Testis (tissue), 5 donors: ENCODE measurements at regions of chr17 and their contacts with region 1.

Region 1: GRCh38 chr17:55351226-55351625 is 70.4 kb downstream of the MMD start:
- DNase-seq: no peak
- H3K4me3 ChIP-seq: no peak overlapping the region
- H3K27ac ChIP-seq: no peak overlapping the region
- H3K4me1 ChIP-seq: no peaks in the 10 kb centered on the region
- H3K27me3 ChIP-seq: no peaks in the 10 kb centered on the region
- CTCF ChIP-seq: no peak
- POLR2A ChIP-seq: no peak

Region 2: GRCh38 chr17:54992797-54993639 is 358.2 kb before region 1 on chr17:
- intact Hi-C with region 1: loop called (anchors 5 kb)
- DNase-seq: no peak
- H3K4me3 ChIP-seq: no peak overlapping the region
- H3K27ac ChIP-seq: no peak overlapping the region
- H3K4me1 ChIP-seq: no peaks in the 10 kb centered on the region
- H3K27me3 ChIP-seq: no peaks in the 10 kb centered on the region
- CTCF ChIP-seq: peak in 2 of 3 experiments; percentile 49 to 65
- POLR2A ChIP-seq: no peak

Region 3: DNA sequence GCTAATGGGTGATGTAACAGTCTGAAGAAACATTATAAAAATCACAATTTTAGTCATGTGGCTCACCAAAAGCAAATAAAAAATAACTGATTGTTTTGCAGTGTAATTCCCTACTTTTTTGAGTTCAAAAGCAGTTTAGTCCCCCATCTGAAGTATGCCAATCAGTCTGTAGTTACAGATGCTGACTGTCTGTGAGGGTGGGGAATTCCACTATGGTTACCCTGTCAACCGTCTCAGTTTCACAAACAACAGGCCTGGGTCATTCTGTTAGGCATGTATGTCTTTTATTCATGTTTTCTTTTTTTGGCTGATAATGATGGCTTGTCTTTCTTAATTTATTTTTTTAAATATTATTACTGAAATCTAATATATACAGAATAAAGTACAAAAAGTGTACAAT is 313.4 kb before region 1 on chr17:
- intact Hi-C with region 1: no loop called
- DNase-seq: no peak
- H3K4me3 ChIP-seq: no peak overlapping the region
- H3K27ac ChIP-seq: no peak overlapping the region
- H3K4me1 ChIP-seq: no peaks in the 10 kb centered on the region
- H3K27me3 ChIP-seq: no peaks in the 10 kb centered on the region
- CTCF ChIP-seq: no peak
- POLR2A ChIP-seq: no peak

Region 4: DNA sequence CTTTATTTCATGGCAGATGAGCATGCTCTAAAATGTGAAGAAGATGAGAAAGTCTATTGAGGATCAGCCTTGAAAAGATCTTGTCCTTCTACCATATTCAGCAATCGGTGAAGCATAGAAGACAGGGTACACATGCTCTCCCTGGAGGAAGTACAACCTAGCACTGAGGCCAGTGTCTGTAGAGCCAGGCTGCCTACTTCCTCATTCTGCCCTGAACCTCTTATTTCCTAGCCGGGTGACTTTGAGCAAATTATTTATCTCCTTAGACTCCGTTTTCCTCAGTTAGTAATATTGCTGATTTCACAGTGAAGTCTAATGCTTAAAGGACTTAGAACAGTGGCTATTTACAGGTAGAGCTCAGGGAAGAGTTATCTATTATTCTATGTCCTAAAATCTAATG is 313.1 kb after region 1 on chr17:
- intact Hi-C with region 1: no loop called
- DNase-seq: no peak
- H3K4me3 ChIP-seq: no peak overlapping the region
- H3K27ac ChIP-seq: no peak overlapping the region
- H3K4me1 ChIP-seq: no peaks in the 10 kb centered on the region
- H3K27me3 ChIP-seq: no peaks in the 10 kb centered on the region
- CTCF ChIP-seq: no peak
- POLR2A ChIP-seq: no peak